Left ventricle myocardium superior (tissue), 1 donor: ENCODE measurements at regions of chr1 and their contacts with region 1.

Region 1: DNA sequence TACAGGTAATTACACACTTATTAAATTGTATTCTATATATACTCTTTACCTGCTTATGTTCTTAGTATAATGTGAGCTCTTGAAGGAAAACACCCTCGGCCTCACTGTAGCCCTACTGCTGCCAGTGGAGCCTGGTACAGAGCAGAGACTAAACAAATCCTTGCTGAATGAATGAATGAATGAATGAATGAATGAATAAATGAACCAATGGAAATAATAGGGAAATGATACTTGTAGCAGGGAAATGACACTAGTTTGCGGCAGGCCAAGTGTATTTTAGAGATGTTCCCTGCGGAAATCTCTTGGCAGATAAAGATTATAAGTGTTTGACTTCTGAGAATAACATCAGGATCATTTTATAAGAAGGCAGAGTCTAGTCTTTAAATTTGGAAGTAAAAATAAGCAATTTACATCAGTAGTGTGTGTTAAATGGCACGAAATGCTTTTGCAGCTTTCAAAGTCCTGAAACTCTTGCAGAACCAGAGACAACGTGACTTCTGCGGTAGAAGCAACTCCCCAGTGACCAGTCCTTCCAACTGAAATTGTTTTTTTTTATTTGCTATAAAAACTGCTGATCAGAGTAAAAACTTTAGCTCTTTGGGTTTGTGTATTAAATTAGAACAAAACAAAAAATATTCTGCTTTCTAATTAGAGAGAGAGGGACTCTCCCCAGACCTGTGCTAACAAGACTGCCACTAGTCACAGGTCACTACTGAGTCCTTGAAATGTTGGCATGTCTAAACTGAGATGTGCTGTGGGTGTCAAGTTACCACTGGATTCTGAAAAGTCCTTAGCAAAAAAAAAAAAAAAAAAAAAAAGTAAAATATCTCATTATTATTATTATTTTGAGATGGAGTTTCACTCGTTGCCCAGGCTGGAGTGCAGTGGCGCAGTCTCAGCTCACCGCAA is 199.3 kb upstream of the MAP1LC3C start:
- DNase-seq: no peak
- ATAC-seq: no peak

Region 2: GRCh38 chr1:242187816-242188215 is 10.3 kb before region 1 on chr1:
- intact Hi-C with region 1: loop called (anchors 1 kb)
- DNase-seq: no peak
- ATAC-seq: no peak

Region 3: GRCh38 chr1:242506724-242507123 is 308.6 kb after region 1 on chr1:
- intact Hi-C with region 1: no loop called
- DNase-seq: no peak
- ATAC-seq: no peak